Endothelial cell of umbilical vein (primary cell): ENCODE measurements at regions of chr3 and their contacts with region 1.

Region 1: GRCh38 chr3:48635222-48636021 is at the start of gene SLC26A6:
- DNase-seq: peak; percentile 98
- H3K4me3 ChIP-seq: peak within 1 kb of the TSS; percentile 70 to 93 (median 76)
- H3K27ac ChIP-seq: peak within 1 kb of the TSS; percentile 32
- H3K4me1 ChIP-seq: peaks cover 17% of the 10 kb centered on the region
- H3K27me3 ChIP-seq: no peaks in the 10 kb centered on the region
- CTCF ChIP-seq: peak; percentile 62 to 76
- POLR2A ChIP-seq: peak; percentile 73
- total RNA-seq, gene SLC26A6: 32.2 and 34.8 TPM in 2 replicates

Region 2: DNA sequence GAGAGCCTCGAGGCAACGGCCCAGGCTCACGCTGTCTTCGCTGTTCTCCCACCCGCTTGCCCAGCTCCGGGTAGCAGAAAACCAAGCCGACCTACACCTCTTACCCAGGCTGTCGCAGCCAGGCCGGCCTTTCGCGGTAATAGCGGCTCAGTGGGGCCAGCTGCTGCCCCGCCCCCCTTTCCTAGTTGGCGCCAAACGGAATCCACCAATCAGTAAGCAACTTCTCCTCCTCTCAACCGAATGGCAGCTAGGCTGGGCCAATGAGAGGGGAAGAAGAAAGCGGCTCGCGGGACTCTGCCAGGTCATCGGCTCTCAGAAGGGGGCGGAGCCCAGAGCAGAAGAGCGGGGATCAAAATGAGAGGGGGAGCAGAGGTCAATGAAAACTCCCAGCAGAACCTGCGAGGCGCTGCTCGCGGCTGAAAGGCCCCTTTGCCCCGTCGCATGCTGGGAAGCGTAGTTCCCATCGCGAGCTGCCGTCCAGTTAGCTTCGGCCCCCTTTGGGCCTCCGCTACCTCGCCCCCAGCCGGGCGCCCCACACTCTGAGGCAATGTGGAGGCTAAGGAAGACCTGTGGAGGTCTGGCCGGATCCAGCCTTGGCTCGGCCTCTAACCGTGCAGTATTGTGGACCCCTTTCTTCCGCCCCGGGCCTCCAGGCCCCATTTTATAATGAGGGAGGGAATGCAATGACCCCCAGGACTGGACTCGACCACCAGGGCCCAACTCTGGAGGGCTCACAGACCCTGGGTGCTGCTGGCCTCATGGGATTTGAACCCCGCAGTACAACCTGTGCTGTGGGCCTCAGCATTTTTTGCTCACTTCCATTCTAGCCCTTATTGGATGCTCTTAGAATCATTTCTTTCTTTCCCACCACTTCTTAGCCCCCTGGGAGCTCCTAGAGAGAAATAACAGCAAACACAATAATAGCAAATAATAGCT is 446.9 kb before region 1 on chr3 and contains the start of gene CDC25A:
- CTCF ChIA-PET with region 1: no interaction called
- POLR2A ChIA-PET with region 1: no interaction called
- dilution Hi-C with region 1: no loop called
- intact Hi-C with region 1: loop called (anchors 1 kb)
- DNase-seq: peak; percentile 99
- H3K4me3 ChIP-seq: peak within 1 kb of the TSS; percentile 68 to 85 (median 72)
- H3K27ac ChIP-seq: peak within 1 kb of the TSS; percentile 34
- H3K4me1 ChIP-seq: peaks cover 5% of the 10 kb centered on the region
- H3K27me3 ChIP-seq: no peaks in the 10 kb centered on the region
- CTCF ChIP-seq: no peak
- POLR2A ChIP-seq: peak; percentile 38
- total RNA-seq, gene CDC25A: 18.4 and 19.0 TPM in 2 replicates

Region 3: GRCh38 chr3:48556793-48557626 is 78.4 kb before region 1 on chr3 and contains the start of gene PFKFB4:
- CTCF ChIA-PET with region 1: interaction called, 9 read pairs
- POLR2A ChIA-PET with region 1: no interaction called
- dilution Hi-C with region 1: no loop called
- intact Hi-C with region 1: loop called (anchors 1 kb)
- DNase-seq: peak; percentile 99
- H3K4me3 ChIP-seq: peak within 1 kb of the TSS; percentile 43 to 63 (median 53)
- H3K27ac ChIP-seq: no peak within 1 kb of the TSS
- H3K4me1 ChIP-seq: peaks cover 12% of the 10 kb centered on the region
- H3K27me3 ChIP-seq: no peaks in the 10 kb centered on the region
- CTCF ChIP-seq: no peak
- POLR2A ChIP-seq: peak; percentile 24
- total RNA-seq, gene PFKFB4: 4.2 and 4.9 TPM in 2 replicates

Region 4: DNA sequence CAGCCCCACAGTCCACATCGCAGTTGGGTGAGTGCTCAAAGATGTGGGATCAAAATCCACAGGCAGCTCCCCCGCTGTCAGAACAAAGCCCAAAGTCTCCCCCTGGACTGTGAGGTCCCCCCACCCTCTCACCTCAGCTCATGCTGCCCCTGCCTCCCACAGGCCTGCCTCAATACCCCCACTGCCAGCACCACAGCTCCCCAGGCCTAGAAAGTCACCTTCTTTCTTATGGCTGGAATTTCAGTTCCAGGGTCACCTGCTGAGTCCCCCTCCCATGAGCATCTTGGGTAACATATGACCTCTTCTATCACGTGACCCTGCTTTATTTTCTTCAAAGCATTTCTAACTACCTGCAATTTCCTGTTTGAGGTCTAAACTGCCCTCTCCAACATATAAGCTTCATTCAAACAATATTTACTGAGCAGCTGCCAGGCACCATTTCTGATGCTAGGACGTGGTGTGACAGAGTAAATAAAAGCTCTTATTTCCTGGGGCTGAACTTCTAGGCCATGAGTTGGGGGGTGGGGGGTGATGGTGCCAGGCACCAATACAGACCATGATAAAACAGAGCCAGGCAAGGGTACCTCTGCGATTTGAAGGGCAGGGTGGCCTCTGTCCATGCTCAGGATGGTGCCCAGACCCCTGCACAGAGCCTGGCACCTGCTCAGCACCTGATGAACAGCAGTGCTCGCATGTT is 11.4 kb before region 1 on chr3:
- CTCF ChIA-PET with region 1: interaction called, 18 read pairs
- POLR2A ChIA-PET with region 1: interaction called, 5 read pairs
- dilution Hi-C with region 1: no loop called
- intact Hi-C with region 1: no loop called
- DNase-seq: no peak
- H3K4me3 ChIP-seq: no peak overlapping the region
- H3K27ac ChIP-seq: no peak overlapping the region
- H3K4me1 ChIP-seq: no peaks in the 10 kb centered on the region
- H3K27me3 ChIP-seq: no peaks in the 10 kb centered on the region
- CTCF ChIP-seq: no peak
- POLR2A ChIP-seq: no peak

Region 5: DNA sequence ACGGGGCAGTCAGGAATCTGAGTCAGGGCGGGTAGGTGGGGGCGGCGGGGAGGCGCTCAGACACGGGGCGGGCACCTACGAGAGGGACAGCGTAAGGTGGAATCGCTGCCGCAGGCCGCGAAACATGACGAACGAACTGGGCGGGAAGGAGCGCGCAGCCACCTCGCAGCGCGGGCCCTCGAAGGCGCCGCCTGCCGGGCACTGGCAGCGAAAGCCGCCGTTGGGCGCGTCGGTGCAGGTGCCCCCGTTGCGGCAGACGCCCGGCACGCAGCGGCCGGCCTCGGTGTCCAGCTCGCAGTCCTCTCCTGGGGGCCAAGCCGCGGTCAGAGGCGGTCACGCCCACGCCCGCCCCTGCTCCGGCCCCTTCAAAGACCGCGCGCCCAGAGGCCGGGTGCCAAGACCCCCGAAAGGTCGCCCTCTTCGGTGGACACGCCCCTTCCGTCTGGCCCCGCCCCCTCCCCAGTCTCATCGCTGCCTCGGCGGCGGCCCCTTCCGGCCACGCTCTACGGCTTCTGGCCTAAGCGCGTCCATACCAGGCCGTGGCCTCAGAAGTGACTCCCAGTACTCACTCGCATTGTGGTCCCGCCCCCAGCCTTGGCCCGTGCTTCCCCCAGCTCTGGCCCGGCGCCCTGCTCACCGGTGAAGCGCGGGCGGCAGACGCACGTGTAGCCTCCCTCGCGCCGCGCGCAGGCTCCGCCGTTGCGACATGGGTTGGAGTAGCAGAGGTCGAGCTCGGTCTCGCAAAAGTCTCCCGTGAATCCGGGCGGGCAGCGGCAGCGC is 20.8 kb after region 1 on chr3:
- CTCF ChIA-PET with region 1: interaction called, 32 read pairs
- POLR2A ChIA-PET with region 1: interaction called, 6 read pairs
- dilution Hi-C with region 1: no loop called
- intact Hi-C with region 1: loop called (anchors 1 kb)
- DNase-seq: peak; percentile 73
- H3K4me3 ChIP-seq: peak overlapping the region; percentile 8 to 46 (median 18)
- H3K27ac ChIP-seq: no peak overlapping the region
- H3K4me1 ChIP-seq: peaks cover 7% of the 10 kb centered on the region
- H3K27me3 ChIP-seq: no peaks in the 10 kb centered on the region
- CTCF ChIP-seq: peak; percentile 75 to 85
- POLR2A ChIP-seq: no peak

Region 6: GRCh38 chr3:48685602-48686511 is 50.4 kb after region 1 on chr3 and contains the start of gene NCKIPSD:
- CTCF ChIA-PET with region 1: interaction called, 5 read pairs
- POLR2A ChIA-PET with region 1: no interaction called
- dilution Hi-C with region 1: no loop called
- intact Hi-C with region 1: loop called (anchors 2 kb)
- DNase-seq: peak; percentile 84
- H3K4me3 ChIP-seq: peak within 1 kb of the TSS; percentile 6 to 90 (median 42)
- H3K27ac ChIP-seq: no peak within 1 kb of the TSS
- H3K4me1 ChIP-seq: peaks cover 14% of the 10 kb centered on the region
- H3K27me3 ChIP-seq: no peaks in the 10 kb centered on the region
- CTCF ChIP-seq: peak; percentile 88 to 90
- POLR2A ChIP-seq: peak; percentile 95
- total RNA-seq, gene NCKIPSD: 12.8 and 13.4 TPM in 2 replicates

Region 7: DNA sequence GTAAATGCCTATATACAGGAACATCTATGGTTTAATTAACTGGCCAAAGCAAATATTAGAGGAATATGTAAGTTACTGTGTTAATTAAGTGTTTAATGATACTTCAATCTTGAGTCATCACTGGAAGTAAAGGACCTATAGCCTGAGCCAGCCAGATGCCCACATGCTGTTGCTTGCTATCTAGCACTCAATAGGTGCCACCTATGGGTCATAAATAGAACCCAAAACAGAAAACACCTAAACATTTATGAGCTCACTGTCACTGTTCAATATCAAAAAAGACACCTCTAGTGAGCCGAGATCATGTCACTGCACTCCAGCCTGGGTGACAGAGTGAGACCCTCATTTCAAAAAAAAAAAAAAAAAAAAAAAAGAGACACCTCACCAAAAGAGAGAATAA is 130.0 kb after region 1 on chr3:
- CTCF ChIA-PET with region 1: no interaction called
- POLR2A ChIA-PET with region 1: no interaction called
- dilution Hi-C with region 1: no loop called
- intact Hi-C with region 1: no loop called
- DNase-seq: no peak
- H3K4me3 ChIP-seq: no peak overlapping the region
- H3K27ac ChIP-seq: no peak overlapping the region
- H3K4me1 ChIP-seq: no peaks in the 10 kb centered on the region
- H3K27me3 ChIP-seq: no peaks in the 10 kb centered on the region
- CTCF ChIP-seq: peak in 1 of 2 donors; percentile 7
- POLR2A ChIP-seq: no peak